CD8-positive, alpha-beta T cell (primary cell): ENCODE measurements at regions of chr1 and their contacts with region 1.

Region 1: DNA sequence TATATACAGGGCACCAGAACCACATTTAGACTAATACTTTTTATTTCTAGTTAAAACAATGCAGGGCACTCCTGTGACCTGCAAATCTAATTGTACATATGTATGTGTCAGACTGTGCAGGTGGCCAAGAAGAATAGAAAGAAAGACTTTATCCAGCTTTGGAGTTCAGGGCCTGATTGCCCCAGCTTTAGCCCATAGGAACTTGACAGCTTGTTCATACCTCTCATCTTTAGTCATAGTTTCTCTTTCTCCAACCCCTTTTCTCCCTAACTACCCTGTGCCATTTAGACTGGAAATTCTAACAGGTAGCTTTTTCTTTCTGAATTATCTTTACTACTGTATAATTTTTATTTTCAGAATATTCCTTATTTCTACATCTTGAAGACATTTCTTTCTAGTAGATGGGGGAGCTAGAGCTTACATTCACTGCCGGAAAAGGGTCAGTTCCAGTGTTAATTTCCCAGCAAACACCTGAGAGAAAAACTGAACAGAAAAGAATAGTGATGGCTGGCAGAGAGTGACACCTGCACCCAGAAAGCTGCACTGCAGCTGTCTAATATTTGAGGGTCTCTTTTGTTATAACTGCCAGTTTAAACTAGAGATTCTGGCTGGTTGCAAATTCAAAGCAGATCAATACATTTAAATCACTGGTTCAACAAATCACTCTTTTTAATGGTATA is 8.4 kb downstream of the YBX1 start:
- DNase-seq: peak in 2 of 9 experiments; percentile 15 to 33
- ATAC-seq: peak; percentile 46
- H3K4me3 ChIP-seq: no peak overlapping the region
- H3K4me3 Mint-ChIP-seq: no peak overlapping the region
- H3K27ac ChIP-seq: no peak overlapping the region
- H3K27ac Mint-ChIP-seq: peak overlapping the region; percentile 27
- H3K4me1 ChIP-seq: peaks cover 75% of the 10 kb centered on the region
- H3K4me1 Mint-ChIP-seq: peaks cover 90% of the 10 kb centered on the region
- H3K27me3 ChIP-seq: no peaks in the 10 kb centered on the region
- H3K27me3 Mint-ChIP-seq: no peaks in the 10 kb centered on the region
- CTCF ChIP-seq: peak; percentile 34

Region 2: GRCh38 chr1:42319128-42319851 is 371.3 kb before region 1 on chr1:
- CTCF ChIA-PET with region 1: no interaction called
- POLR2A ChIA-PET with region 1: no interaction called
- intact Hi-C with region 1: loop called in 1 of 2 experiments (anchors 2 kb)
- DNase-seq: peak in 6 of 9 experiments; percentile 14 to 44 (median 25)
- ATAC-seq: peak; percentile 35
- H3K4me3 ChIP-seq: peak overlapping the region in 1 of 2 experiments; percentile 22
- H3K4me3 Mint-ChIP-seq: peak overlapping the region; percentile 78
- H3K27ac ChIP-seq: peak overlapping the region; percentile 28 to 65
- H3K27ac Mint-ChIP-seq: peak overlapping the region; percentile 93
- H3K4me1 ChIP-seq: peaks cover 84% of the 10 kb centered on the region
- H3K4me1 Mint-ChIP-seq: peaks cover 89% of the 10 kb centered on the region
- H3K27me3 ChIP-seq: no peaks in the 10 kb centered on the region
- H3K27me3 Mint-ChIP-seq: no peaks in the 10 kb centered on the region
- CTCF ChIP-seq: no peak

Region 3: GRCh38 chr1:42576935-42577334 is 113.7 kb before region 1 on chr1:
- CTCF ChIA-PET with region 1: interaction called, 6 read pairs
- POLR2A ChIA-PET with region 1: no interaction called
- intact Hi-C with region 1: loop called (anchors 2 to 5 kb)
- DNase-seq: no peak
- ATAC-seq: no peak
- H3K4me3 ChIP-seq: no peak overlapping the region
- H3K4me3 Mint-ChIP-seq: no peak overlapping the region
- H3K27ac ChIP-seq: no peak overlapping the region
- H3K27ac Mint-ChIP-seq: no peak overlapping the region
- H3K4me1 ChIP-seq: no peaks in the 10 kb centered on the region
- H3K4me1 Mint-ChIP-seq: no peaks in the 10 kb centered on the region
- H3K27me3 ChIP-seq: no peaks in the 10 kb centered on the region
- H3K27me3 Mint-ChIP-seq: no peaks in the 10 kb centered on the region
- CTCF ChIP-seq: no peak